ENCODE measurements at regions of chr11 and their contacts with region 1.

Region 1: GRCh38 chr11:94128746-94129511 is at the start of gene PANX1:
- DNase-seq: peak; percentile 82
- H3K4me3 Mint-ChIP-seq: no peak within 1 kb of the TSS
- H3K27ac Mint-ChIP-seq: no peak within 1 kb of the TSS
- H3K4me1 Mint-ChIP-seq: peaks cover 16% of the 10 kb centered on the region
- H3K27me3 Mint-ChIP-seq: no peaks in the 10 kb centered on the region
- CTCF ChIP-seq: no peak
- total RNA-seq, gene PANX1: 26.1 and 30.1 TPM in 2 replicates

Region 2: DNA sequence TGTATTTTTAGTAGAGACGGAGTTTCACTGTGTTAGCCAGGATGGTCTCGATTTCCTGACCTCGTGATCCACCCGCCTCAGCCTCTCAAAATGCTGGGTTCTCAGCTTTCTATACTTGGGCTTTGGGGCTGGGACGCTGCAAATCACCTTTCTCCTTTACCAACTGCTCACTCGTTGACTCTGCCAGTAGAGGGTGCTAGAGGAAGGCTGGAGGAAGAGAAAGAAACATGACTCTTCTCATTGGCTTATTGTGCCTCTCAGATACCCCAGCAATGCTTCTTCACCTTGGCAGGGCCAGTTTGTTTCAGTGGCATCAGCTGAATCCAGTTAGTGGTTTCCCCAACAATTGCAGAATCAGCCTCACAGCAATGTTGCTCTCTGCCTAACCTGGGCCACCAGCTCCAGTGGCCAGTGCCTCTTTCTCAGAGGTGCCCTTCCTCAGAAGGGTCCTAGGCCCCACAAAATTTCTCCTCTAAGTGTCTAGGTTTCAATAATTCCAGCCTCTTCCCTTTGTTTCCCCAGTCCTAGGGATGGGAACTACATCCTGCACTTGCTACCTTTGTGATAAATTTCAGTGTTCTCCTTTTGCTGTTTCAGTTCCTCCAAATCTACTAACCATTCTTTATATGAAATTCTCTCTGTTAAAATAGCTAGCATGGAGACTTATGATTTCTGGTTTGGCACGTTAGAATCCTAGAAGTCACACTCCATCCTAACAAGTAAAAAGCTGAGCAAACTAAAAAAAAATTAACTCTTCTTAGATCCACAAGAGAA is 207.0 kb before region 1 on chr11:
- CTCF ChIA-PET with region 1: interaction called, 6 read pairs
- POLR2A ChIA-PET with region 1: interaction called, 5 read pairs
- intact Hi-C with region 1: loop called (anchors 5 kb)
- DNase-seq: peak; percentile 84
- H3K4me3 Mint-ChIP-seq: no peak overlapping the region
- H3K27ac Mint-ChIP-seq: no peak overlapping the region
- H3K4me1 Mint-ChIP-seq: no peaks in the 10 kb centered on the region
- H3K27me3 Mint-ChIP-seq: no peaks in the 10 kb centered on the region
- CTCF ChIP-seq: peak; percentile 78

Region 3: DNA sequence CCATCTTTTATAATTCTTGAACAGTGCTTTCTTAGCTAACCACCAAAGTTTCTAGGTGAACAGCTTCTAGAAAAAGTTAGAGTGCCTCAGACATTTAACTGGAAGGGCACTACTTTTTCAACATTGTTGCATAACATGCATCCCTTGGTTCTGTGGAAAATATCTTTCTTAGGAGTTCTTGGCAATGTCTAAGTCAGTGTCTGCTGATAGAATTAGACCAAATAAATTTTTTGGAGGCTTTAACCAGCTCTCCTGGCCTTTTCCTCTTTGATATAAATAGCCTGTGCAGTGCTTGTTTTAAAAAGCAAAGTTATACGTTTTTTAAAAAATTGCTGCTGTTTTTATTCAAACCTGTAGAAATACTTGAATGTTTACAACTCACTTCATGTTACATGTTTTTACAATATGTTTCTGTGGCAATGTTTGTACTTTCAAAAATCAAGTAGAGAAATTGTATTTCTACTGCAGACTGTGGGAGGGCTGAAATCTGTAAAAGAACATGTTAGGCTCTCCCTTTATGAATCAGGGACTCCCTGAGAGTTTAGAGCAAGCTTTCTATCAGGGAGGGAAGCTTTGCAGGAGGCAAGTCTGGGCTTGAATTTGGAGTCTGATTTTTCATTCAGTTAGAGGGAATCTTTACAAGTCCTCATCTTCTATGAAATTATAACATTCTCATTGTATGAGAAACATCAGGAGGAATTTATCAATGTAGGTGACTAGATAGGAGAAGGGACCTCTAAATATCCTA is 16.5 kb before region 1 on chr11:
- CTCF ChIA-PET with region 1: interaction called, 9 read pairs
- POLR2A ChIA-PET with region 1: interaction called, 30 read pairs
- intact Hi-C with region 1: no loop called
- DNase-seq: peak; percentile 40
- H3K4me3 Mint-ChIP-seq: no peak overlapping the region
- H3K27ac Mint-ChIP-seq: peak overlapping the region; percentile 57
- H3K4me1 Mint-ChIP-seq: peaks cover 33% of the 10 kb centered on the region
- H3K27me3 Mint-ChIP-seq: no peaks in the 10 kb centered on the region
- CTCF ChIP-seq: no peak

Region 4: DNA sequence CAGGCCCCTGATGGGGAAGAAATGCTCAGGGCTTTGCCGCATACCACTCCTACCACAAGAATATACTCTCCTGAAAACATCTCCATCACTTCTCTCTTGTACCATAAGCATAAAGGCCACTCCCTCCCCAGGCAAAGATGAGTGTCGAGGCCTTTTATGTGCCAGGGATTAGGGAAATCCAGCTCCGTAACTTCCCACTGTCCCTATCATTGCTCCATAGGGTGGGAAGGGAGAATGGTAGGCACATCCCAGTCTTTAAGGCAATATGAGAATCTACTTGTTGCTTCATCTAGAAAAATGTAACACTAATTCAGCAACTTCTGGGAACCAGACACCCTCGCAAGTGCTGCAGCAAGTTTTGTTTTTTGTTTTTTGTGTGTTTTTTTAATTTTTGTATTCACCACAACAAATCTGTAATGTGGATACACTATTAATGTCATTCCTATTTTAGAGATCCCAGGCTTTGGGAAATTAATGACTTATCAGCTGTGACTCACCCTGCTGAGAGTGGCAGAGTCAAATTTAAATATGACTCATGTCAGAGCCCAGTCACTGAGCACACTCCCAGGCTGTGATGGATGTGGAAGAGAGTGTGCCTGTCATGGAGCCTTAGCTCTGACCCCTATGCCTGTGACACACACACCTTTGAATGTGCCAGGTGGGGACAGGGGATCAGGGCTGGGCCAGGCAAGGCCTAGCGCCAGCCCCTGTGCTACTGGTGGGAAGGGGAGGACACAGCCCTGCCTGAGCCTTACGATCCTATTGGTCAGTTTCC is 23.2 kb after region 1 on chr11:
- CTCF ChIA-PET with region 1: interaction called, 8 read pairs
- POLR2A ChIA-PET with region 1: interaction called, 19 read pairs
- intact Hi-C with region 1: loop called (anchors 2 kb)
- DNase-seq: peak; percentile 88
- H3K4me3 Mint-ChIP-seq: no peak overlapping the region
- H3K27ac Mint-ChIP-seq: no peak overlapping the region
- H3K4me1 Mint-ChIP-seq: peaks cover 57% of the 10 kb centered on the region
- H3K27me3 Mint-ChIP-seq: no peaks in the 10 kb centered on the region
- CTCF ChIP-seq: no peak

Region 5: DNA sequence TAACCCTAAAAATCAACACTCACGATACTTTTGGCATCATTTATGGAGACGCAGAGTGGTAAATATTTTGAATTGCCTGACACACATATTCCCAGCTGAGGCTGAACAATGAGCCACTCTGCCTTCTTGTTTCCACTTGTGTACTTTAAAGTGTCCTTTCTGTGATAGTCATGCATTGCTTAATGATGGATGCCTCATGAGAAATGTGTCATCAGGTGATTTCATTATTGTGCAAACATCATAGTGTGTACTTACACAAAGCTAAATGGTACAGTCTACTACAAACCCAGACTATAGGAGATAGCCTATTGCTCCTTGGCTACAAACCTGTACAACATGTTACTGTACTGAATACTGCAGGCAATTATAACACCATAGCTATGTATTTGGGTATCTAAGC is 320.5 kb after region 1 on chr11:
- CTCF ChIA-PET with region 1: no interaction called
- POLR2A ChIA-PET with region 1: interaction called, 11 read pairs
- intact Hi-C with region 1: no loop called
- DNase-seq: peak; percentile 91
- H3K4me3 Mint-ChIP-seq: no peak overlapping the region
- H3K27ac Mint-ChIP-seq: peak overlapping the region; percentile 36
- H3K4me1 Mint-ChIP-seq: peaks cover 7% of the 10 kb centered on the region
- H3K27me3 Mint-ChIP-seq: no peaks in the 10 kb centered on the region
- CTCF ChIP-seq: no peak